ENCODE measurements at regions of chr12 and their contacts with region 1.

Region 1: GRCh38 chr12:46675736-46676135 is 150.1 kb downstream of the SLC38A4 start:
- DNase-seq: no peak

Region 2: DNA sequence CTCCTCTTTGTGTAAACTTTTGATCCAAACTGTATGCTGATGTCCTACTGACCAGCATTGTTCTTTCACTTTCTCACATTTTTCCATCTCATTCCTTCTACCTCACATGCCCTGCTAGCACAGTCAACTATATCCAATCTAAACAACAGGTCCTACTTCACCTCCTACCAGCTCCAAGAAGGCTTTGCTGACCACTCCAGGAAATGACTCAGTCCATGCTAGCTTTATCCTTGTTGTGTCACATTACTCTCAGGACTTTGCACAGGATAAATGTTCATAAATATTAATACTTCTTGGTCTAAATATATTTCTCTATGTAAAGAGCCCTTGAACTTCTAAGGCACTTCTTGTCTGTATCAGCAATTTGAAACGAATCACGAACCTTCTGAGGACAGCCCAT is 338.7 kb after region 1 on chr12:
- intact Hi-C with region 1: loop called (anchors 10 kb)
- DNase-seq: no peak

Measured in posterior cingulate gyrus (tissue), 11 donors.